Heart right ventricle (tissue), 16 donors: ENCODE measurements at regions of chr1 and their contacts with region 1.

Region 1: GRCh38 chr1:51192213-51192843 is 43.7 kb upstream of the RNF11 start:
- DNase-seq: peak; percentile 20 to 67
- ATAC-seq: peak in 3 of 8 donors; percentile 43 to 65 (median 56)
- H3K4me3 ChIP-seq: no peak overlapping the region
- H3K27ac ChIP-seq: no peak overlapping the region
- H3K4me1 ChIP-seq: peaks cover 0 to 6% (median 0%) of the 10 kb centered on the region in 9 donors
- H3K27me3 ChIP-seq: no peaks in the 10 kb centered on the region
- CTCF ChIP-seq: peak; percentile 66 to 93 (median 84)

Region 2: GRCh38 chr1:50368179-50369012 is 823.9 kb before region 1 on chr1:
- intact Hi-C with region 1: loop called in 2 of 10 experiments (anchors 10 kb)
- DNase-seq: peak in 1 of 2 donors; percentile 18
- ATAC-seq: peak in 4 of 8 donors; percentile 14 to 61 (median 45)
- H3K4me3 ChIP-seq: no peak overlapping the region
- H3K27ac ChIP-seq: no peak overlapping the region
- H3K4me1 ChIP-seq: peaks cover 0 to 7% (median 3%) of the 10 kb centered on the region in 9 donors
- H3K27me3 ChIP-seq: peaks cover 6 to 62% (median 58%) of the 10 kb centered on the region in 7 donors
- CTCF ChIP-seq: peak; percentile 54 to 83 (median 75)

Region 3: GRCh38 chr1:50873458-50874187 is 318.7 kb before region 1 on chr1:
- intact Hi-C with region 1: loop called in 1 of 10 experiments (anchors 10 kb)
- DNase-seq: peak; percentile 15 to 29
- ATAC-seq: peak in 2 of 8 donors; percentile 42 to 47
- H3K4me3 ChIP-seq: no peak overlapping the region
- H3K27ac ChIP-seq: no peak overlapping the region
- H3K4me1 ChIP-seq: peaks cover 0 to 6% (median 0%) of the 10 kb centered on the region in 9 donors
- H3K27me3 ChIP-seq: no peaks in the 10 kb centered on the region
- CTCF ChIP-seq: peak in 8 of 9 donors; percentile 8 to 67 (median 47)

Region 4: GRCh38 chr1:50901872-50902271 is 290.5 kb before region 1 on chr1:
- intact Hi-C with region 1: no loop called
- DNase-seq: no peak
- ATAC-seq: no peak
- H3K4me3 ChIP-seq: no peak overlapping the region
- H3K27ac ChIP-seq: no peak overlapping the region
- H3K4me1 ChIP-seq: no peaks in the 10 kb centered on the region
- H3K27me3 ChIP-seq: no peaks in the 10 kb centered on the region
- CTCF ChIP-seq: no peak

Region 5: DNA sequence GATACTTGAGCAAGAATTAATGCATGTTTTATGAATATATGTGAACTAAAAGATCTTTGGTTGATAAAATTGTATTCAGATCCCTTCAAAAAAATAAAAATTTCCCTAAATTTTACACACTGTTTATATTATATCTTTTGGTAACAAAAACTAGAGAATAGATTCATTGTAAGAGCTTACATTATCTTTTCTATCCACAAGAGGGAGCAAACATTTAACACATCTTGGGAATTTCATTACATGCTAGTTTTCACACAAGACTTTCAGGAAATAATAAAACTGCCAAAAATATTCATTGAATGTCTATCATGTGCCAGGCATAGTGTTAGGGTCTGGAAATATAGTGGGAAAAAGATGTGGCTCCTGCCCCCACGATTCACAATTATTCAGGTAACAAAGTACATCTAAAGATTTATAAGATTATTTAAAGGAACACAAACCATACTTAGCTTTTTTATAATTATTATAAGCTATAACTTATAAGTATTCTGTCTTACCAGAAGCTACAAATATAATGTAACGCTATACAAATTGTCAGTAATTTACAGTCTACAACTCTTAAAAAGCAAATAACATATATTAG is 262.9 kb before region 1 on chr1:
- intact Hi-C with region 1: loop called in 4 of 10 experiments (anchors 5 to 10 kb)
- DNase-seq: no peak
- ATAC-seq: no peak
- H3K4me3 ChIP-seq: no peak overlapping the region
- H3K27ac ChIP-seq: no peak overlapping the region
- H3K4me1 ChIP-seq: peaks cover 0 to 19% (median 9%) of the 10 kb centered on the region in 9 donors
- H3K27me3 ChIP-seq: no peaks in the 10 kb centered on the region
- CTCF ChIP-seq: peak; percentile 13 to 77 (median 59)

Region 6: DNA sequence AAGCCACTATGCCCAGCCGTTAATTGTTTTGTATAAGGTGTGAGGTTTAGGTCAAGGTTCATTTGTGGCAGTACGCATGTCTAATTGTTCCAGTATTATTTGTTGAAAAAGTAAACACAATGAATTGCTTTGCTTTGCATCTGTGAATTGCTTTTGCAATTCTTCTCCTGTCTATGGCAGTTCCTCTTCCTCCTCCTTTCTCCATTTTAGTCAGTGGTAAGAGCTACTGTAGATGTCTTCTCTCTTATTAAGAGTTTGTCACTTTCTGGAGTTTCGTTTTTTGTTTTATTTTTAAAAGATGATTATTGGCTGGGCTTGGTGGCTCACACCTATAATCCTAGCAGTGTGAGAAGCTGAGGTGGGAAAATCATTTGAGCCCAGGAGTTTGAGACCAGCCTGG is 61.1 kb before region 1 on chr1:
- intact Hi-C with region 1: no loop called
- DNase-seq: no peak
- ATAC-seq: no peak
- H3K4me3 ChIP-seq: no peak overlapping the region
- H3K27ac ChIP-seq: no peak overlapping the region
- H3K4me1 ChIP-seq: no peaks in the 10 kb centered on the region
- H3K27me3 ChIP-seq: peaks cover 0 to 18% (median 0%) of the 10 kb centered on the region in 7 donors
- CTCF ChIP-seq: no peak

Region 7: GRCh38 chr1:51296383-51297357 is 104.3 kb after region 1 on chr1:
- intact Hi-C with region 1: loop called in 4 of 10 experiments (anchors 2 to 5 kb)
- DNase-seq: peak; percentile 82 to 86
- ATAC-seq: peak; percentile 76 to 90 (median 86)
- H3K4me3 ChIP-seq: peak overlapping the region in 9 of 10 donors; percentile 39 to 61 (median 52)
- H3K27ac ChIP-seq: peak overlapping the region in 5 of 10 donors; percentile 10 to 64 (median 25)
- H3K4me1 ChIP-seq: peaks cover 3 to 18% (median 12%) of the 10 kb centered on the region in 9 donors
- H3K27me3 ChIP-seq: no peaks in the 10 kb centered on the region
- CTCF ChIP-seq: peak; percentile 90 to 99 (median 97)

Region 8: GRCh38 chr1:51359879-51360278 is 167.6 kb after region 1 on chr1:
- intact Hi-C with region 1: loop called in 1 of 10 experiments (anchors 5 kb)
- DNase-seq: no peak
- ATAC-seq: no peak
- H3K4me3 ChIP-seq: no peak overlapping the region
- H3K27ac ChIP-seq: no peak overlapping the region
- H3K4me1 ChIP-seq: no peaks in the 10 kb centered on the region
- H3K27me3 ChIP-seq: no peaks in the 10 kb centered on the region
- CTCF ChIP-seq: no peak